ENCODE measurements at regions of chr20 and their contacts with region 1.

Region 1: GRCh38 chr20:733861-734260 is 34.4 kb downstream of the SLC52A3 start:
- DNase-seq: no peak
- ATAC-seq: no peak
- H3K4me3 ChIP-seq: no peak overlapping the region
- H3K27ac ChIP-seq: no peak overlapping the region
- H3K4me1 ChIP-seq: no peaks in the 10 kb centered on the region
- H3K27me3 ChIP-seq: peaks cover 0 to 4% of the 10 kb centered on the region in 2 donors
- CTCF ChIP-seq: no peak
- POLR2A ChIP-seq: no peak

Region 2: DNA sequence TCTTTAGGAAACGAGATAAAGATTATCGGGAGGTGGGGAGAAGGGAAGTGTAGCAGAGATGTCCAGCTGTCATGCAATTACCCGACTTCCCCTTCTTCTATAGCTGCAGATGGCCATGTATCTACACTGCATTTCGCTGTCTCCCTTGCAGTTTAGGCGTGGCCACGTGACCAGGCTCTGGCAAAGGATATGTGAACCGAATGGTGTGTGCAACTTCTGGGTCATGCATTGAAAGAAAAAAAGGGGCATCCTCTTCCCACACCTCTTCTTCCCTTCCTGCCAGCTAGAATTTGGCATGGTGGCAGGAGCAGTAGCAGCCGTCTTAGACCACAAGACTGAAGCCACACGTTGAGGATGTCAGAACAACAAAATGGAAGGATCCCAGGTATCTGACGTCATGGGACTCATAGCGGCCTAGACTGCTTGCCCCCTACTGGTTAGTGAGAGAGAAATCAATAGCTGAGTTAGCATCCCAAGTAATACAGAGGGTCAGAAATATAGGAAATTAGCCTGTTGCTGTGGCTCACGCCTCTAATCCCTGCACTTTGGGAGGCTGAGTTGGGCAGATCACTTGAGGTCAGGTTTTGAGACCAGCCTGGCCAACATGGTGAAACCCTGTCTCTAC is 156.6 kb before region 1 on chr20:
- intact Hi-C with region 1: loop called (anchors 10 kb)
- DNase-seq: no peak
- ATAC-seq: no peak
- H3K4me3 ChIP-seq: no peak overlapping the region
- H3K27ac ChIP-seq: no peak overlapping the region
- H3K4me1 ChIP-seq: peaks cover 2% of the 10 kb centered on the region
- H3K27me3 ChIP-seq: no peaks in the 10 kb centered on the region
- CTCF ChIP-seq: no peak
- POLR2A ChIP-seq: no peak

Region 3: DNA sequence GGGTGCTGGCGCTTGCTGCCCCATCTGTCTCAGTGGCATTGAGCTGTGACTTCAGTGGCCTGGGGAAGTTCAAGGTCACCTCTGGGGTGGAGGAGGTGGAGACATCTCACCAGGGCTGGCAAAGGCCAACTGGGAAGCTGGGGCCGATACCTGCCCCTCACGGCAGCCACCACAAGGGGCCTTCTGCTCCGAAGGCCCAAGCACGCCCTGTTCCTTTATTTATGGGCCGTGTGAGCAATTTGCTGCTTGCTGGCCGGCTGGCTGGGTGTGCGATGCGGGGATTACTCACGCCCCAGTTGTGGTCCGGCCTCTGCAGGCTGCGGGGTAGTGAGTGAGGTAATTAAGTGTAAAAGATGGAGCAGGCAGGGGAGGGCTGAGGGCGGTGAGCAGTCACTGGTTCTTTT is 45.0 kb before region 1 on chr20:
- intact Hi-C with region 1: no loop called
- DNase-seq: peak in 3 of 4 donors; percentile 37 to 42 (median 41)
- ATAC-seq: peak; percentile 33
- H3K4me3 ChIP-seq: no peak overlapping the region
- H3K27ac ChIP-seq: no peak overlapping the region
- H3K4me1 ChIP-seq: no peaks in the 10 kb centered on the region
- H3K27me3 ChIP-seq: no peaks in the 10 kb centered on the region
- CTCF ChIP-seq: no peak
- POLR2A ChIP-seq: no peak

Measured in body of pancreas (tissue), 4 donors.